ENCODE measurements at regions of chr9 and their contacts with region 1.

Region 1: GRCh38 chr9:115883457-115884329 is 269.9 kb upstream of the PAPPA start:
- DNase-seq: peak; percentile 86
- H3K4me3 Mint-ChIP-seq: no peak overlapping the region
- H3K27ac Mint-ChIP-seq: no peak overlapping the region
- H3K4me1 Mint-ChIP-seq: peaks cover 6% of the 10 kb centered on the region
- H3K27me3 Mint-ChIP-seq: no peaks in the 10 kb centered on the region
- CTCF ChIP-seq: peak; percentile 74

Region 2: DNA sequence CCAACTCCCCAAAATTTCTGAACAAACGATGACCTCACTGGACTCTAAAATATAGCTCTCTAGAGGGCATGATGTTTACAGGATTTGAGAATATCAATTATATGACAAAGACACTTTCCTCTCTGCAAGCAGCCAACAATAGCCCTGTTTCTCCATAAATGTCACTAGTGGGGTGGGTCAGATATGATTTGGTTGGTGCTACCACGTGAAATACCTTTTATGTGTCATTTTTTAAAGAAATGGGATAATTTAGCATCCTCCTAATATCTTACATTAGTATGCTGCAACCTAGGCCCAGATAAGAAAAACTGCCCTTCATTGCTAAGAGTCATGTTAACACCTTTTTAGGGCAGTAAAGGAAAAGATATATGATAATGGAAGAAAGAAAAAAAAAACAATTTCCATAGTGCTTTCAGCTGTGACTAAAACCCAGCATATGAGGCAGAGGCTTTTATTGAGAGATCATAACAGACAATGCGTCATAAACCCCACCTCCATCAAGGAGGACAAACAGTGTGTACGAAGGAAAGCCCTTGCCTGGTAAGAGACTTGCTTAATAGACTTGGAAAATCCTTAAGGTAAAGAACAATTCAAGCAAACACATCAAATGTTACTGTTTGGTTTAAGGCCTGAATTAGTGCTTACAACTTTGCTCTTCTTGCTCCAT is 102.5 kb before region 1 on chr9:
- CTCF ChIA-PET with region 1: no interaction called
- POLR2A ChIA-PET with region 1: no interaction called
- intact Hi-C with region 1: no loop called
- DNase-seq: no peak
- H3K4me3 Mint-ChIP-seq: no peak overlapping the region
- H3K27ac Mint-ChIP-seq: no peak overlapping the region
- H3K4me1 Mint-ChIP-seq: no peaks in the 10 kb centered on the region
- H3K27me3 Mint-ChIP-seq: no peaks in the 10 kb centered on the region
- CTCF ChIP-seq: no peak

Region 3: DNA sequence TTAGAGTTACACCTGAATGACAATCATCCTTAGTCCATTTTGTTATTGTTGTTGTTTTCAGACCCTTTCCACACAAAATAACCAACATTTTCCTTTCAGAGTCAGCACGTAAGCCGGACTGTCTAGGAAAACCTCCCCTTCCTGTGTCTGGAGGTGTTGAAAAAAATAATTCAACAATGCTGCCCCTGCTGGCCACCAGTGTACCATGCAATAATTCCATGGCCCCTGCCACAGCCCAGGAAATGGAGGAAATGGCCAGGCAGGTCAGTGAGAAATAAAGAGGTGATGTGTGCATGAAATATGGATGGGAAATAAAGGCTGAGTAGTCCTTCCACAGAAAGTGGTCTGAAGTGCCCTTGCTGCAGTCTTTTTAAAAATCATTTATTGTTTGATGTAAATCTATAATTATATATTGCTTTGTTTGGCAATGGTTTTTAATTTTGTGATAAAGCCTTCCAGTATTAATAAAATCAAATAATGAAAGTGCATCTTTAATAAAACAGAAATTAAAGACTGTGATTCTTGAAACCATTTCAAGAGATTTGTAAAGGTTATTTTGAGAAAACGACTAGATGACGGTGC is 117.1 kb after region 1 on chr9:
- CTCF ChIA-PET with region 1: no interaction called
- POLR2A ChIA-PET with region 1: no interaction called
- intact Hi-C with region 1: loop called (anchors 5 kb)
- DNase-seq: peak; percentile 45
- H3K4me3 Mint-ChIP-seq: no peak overlapping the region
- H3K27ac Mint-ChIP-seq: no peak overlapping the region
- H3K4me1 Mint-ChIP-seq: peaks cover 44% of the 10 kb centered on the region
- H3K27me3 Mint-ChIP-seq: no peaks in the 10 kb centered on the region
- CTCF ChIP-seq: peak; percentile 37

Region 4: GRCh38 chr9:116027556-116028350 is 144.1 kb after region 1 on chr9:
- CTCF ChIA-PET with region 1: no interaction called
- POLR2A ChIA-PET with region 1: no interaction called
- intact Hi-C with region 1: no loop called
- DNase-seq: peak; percentile 49
- H3K4me3 Mint-ChIP-seq: no peak overlapping the region
- H3K27ac Mint-ChIP-seq: peak overlapping the region; percentile 86
- H3K4me1 Mint-ChIP-seq: peaks cover 6% of the 10 kb centered on the region
- H3K27me3 Mint-ChIP-seq: no peaks in the 10 kb centered on the region
- CTCF ChIP-seq: no peak

Region 5: DNA sequence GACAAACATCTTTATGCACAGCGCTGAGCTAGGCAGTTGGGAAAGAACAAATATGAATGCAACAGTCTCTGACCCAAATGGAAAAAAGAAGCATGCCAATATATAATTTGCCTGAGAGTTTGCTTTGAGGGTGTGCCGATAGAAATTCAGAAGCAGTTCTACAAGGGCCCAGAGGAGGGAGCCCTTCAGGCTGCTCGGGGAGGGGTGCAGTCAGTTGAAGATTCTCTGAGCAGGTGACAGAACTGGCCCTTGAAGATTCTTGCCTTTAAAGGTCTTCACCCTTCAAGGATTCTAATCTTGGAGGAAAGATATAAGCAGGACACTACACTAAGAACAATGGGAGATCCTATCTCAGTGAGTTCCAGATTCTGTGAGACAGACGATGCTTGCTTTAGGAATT is 266.2 kb after region 1 on chr9:
- CTCF ChIA-PET with region 1: interaction called, 25 read pairs
- POLR2A ChIA-PET with region 1: interaction called, 3 read pairs
- intact Hi-C with region 1: loop called (anchors 1 kb)
- DNase-seq: peak; percentile 51
- H3K4me3 Mint-ChIP-seq: no peak overlapping the region
- H3K27ac Mint-ChIP-seq: no peak overlapping the region
- H3K4me1 Mint-ChIP-seq: peaks cover 24% of the 10 kb centered on the region
- H3K27me3 Mint-ChIP-seq: no peaks in the 10 kb centered on the region
- CTCF ChIP-seq: peak; percentile 47

Region 6: DNA sequence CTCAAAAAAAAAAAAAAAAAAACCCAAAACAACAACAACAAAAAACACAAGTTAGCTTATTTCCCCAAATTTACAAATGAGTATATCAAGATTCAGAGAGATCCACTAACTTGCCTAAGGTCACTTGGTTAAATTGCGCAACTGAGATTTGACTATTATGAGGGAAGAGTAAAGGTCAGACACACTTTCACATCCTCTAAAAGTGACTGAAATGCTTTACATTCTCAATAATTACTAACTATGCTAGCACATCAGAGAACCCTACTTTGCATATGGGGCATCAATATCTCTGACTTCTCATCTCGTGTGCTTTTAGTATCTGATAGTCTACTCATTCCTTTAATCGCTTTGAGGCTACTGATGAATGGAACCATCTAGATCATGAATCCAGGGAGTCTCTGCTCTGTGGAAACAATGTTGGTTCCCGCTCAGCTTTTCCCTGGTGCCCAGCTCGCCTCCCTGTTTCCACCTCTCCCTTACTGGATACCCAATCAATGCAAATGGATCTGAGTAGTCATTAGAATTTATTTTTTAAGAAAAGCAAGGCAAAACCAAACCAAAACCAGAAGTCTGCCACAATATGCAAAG is 621.3 kb after region 1 on chr9:
- CTCF ChIA-PET with region 1: interaction called, 4 read pairs
- POLR2A ChIA-PET with region 1: no interaction called
- intact Hi-C with region 1: loop called (anchors 5 kb)
- DNase-seq: no peak
- H3K4me3 Mint-ChIP-seq: no peak overlapping the region
- H3K27ac Mint-ChIP-seq: no peak overlapping the region
- H3K4me1 Mint-ChIP-seq: peaks cover 35% of the 10 kb centered on the region
- H3K27me3 Mint-ChIP-seq: no peaks in the 10 kb centered on the region
- CTCF ChIP-seq: no peak

Region 7: DNA sequence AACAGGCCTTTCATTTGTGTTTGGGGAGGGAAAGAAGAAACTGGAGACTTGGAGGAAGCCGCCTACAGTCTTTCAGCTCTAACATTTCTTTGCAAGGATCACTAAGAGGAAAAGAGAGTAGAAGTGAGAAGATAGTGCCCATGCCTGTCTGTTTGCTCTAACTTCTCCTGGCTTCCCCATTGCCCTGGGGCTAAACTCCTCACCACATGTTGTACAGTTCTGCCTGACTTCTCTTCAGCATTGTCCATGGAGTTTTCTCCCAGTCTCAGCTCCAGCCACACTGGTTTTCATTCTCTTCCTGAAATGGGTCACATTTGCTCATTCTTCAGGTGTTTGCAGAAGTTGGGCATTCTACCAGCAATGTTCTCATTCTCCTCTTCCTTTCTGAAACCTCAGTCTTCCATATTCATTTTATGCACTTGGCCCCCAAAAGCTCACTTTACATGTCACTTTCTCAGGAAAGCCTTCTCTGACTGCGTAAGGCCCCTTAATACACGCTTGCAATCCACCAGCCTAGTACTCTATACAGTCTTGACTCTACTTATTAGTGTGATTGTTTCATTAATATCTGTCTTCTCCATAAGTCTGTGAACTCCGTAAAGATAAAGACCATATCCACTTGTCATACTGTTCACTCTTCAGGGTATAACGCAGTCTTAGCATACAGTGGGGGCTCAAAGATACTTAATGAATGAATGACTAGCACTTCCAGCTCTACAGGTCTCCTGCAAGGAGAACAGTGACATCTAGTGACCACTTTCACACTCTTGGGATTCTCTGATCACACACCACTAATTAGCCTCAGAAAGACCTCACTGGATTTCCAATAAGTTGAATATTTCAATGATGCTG is 763.2 kb after region 1 on chr9:
- CTCF ChIA-PET with region 1: interaction called, 6 read pairs
- POLR2A ChIA-PET with region 1: no interaction called
- intact Hi-C with region 1: loop called (anchors 5 kb)
- DNase-seq: peak; percentile 59
- H3K4me3 Mint-ChIP-seq: no peak overlapping the region
- H3K27ac Mint-ChIP-seq: no peak overlapping the region
- H3K4me1 Mint-ChIP-seq: peaks cover 6% of the 10 kb centered on the region
- H3K27me3 Mint-ChIP-seq: no peaks in the 10 kb centered on the region
- CTCF ChIP-seq: peak; percentile 80